ENCODE measurements at regions of chr6 and their contacts with region 1.

Region 1: DNA sequence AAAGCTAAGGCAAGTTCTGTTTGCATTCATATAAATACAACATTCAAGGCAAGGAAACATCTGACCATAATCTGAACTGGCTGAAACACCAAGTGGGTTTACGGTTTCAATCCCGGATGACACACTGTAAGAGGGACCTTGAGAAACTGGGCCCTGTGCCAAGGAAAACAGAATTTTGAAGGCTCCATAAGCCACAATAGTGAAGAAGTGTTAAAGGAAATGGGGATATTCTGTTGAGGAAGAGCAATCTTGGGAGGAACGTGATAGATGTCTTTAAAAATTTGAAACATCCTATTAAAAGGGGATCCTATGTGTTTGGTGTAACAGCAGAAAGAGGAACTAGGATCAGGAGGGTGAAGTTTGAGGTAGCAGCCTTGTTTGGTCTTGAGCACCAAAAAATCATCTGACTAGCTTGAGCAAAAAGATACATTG is 82.4 kb upstream of the TAB2 start:
- DNase-seq: no peak
- H3K4me3 Mint-ChIP-seq: no peak overlapping the region
- H3K27ac Mint-ChIP-seq: peak overlapping the region; percentile 99
- H3K4me1 Mint-ChIP-seq: peaks cover 60% of the 10 kb centered on the region
- H3K27me3 Mint-ChIP-seq: no peaks in the 10 kb centered on the region

Region 2: GRCh38 chr6:149082286-149082707 is 152.8 kb before region 1 on chr6:
- intact Hi-C with region 1: loop called (anchors 2 kb)
- DNase-seq: peak; percentile 79
- H3K4me3 Mint-ChIP-seq: no peak overlapping the region
- H3K27ac Mint-ChIP-seq: peak overlapping the region; percentile 77
- H3K4me1 Mint-ChIP-seq: peaks cover 79% of the 10 kb centered on the region
- H3K27me3 Mint-ChIP-seq: no peaks in the 10 kb centered on the region

Region 3: DNA sequence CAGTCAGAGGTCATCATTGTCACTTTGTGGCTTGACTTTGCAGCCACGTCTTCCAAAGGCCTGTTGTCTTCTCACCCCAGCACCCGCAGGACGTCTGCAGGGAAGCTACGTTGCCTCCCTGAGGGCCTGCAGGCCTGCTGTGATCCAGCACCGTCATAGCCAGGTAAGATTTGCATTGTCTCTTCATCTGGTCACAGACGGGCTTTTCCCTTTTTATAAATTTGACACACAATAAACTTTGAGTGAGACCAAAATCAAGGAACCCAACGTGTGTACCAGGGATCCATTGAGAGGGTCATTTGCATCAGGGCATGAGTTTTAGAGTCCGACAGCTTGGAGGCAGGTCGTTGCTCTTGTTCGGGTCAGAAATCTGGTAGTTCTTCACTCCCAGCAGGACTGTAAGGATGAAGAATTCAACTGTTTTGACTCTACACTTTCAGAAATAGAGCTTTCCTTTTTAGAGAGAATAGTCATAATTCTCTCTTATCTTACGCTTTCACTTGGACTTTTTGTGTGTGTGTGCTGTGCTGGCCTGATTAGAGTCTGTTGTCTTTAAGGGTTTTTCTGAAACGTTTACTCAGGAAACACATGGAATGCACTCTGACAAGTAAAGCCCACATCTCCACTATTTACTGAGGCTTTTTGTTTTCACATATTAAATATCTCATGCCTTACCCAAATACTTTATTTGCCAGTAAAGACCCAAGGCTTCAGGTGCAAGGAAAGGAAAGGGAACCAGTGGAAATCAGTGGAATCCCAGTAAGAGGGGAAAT is 94.8 kb before region 1 on chr6:
- intact Hi-C with region 1: loop called (anchors 1 kb)
- DNase-seq: no peak
- H3K4me3 Mint-ChIP-seq: peak overlapping the region; percentile 84
- H3K27ac Mint-ChIP-seq: peak overlapping the region; percentile 100
- H3K4me1 Mint-ChIP-seq: peaks cover 46% of the 10 kb centered on the region
- H3K27me3 Mint-ChIP-seq: no peaks in the 10 kb centered on the region

Region 4: DNA sequence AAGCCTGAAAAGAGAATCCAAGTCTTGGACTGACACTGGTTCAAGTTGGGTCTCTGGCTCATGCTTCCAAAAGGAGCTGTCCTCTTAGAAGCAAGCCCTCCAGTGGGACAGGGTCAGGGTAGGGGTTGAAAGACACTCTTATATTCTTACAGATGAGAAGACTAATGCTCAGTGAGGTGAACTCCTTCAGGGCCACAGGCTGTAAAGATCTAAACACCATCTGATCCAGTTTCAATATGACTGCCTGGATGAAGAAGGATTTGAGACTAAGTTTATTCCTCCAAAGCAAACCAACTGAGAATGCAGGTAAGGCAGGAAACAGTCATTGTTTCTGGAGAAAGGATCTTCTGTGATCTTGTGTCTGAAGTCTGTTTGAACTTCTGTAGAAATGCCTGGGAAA is 16.7 kb before region 1 on chr6:
- intact Hi-C with region 1: loop called (anchors 1 kb)
- DNase-seq: no peak
- H3K4me3 Mint-ChIP-seq: peak overlapping the region; percentile 28
- H3K27ac Mint-ChIP-seq: peak overlapping the region; percentile 86
- H3K4me1 Mint-ChIP-seq: peaks cover 48% of the 10 kb centered on the region
- H3K27me3 Mint-ChIP-seq: no peaks in the 10 kb centered on the region

Region 5: GRCh38 chr6:149335924-149336608 is 100.9 kb after region 1 on chr6:
- intact Hi-C with region 1: loop called (anchors 5 kb)
- DNase-seq: no peak
- H3K4me3 Mint-ChIP-seq: peak overlapping the region; percentile 45
- H3K27ac Mint-ChIP-seq: peak overlapping the region; percentile 88
- H3K4me1 Mint-ChIP-seq: peaks cover 80% of the 10 kb centered on the region
- H3K27me3 Mint-ChIP-seq: no peaks in the 10 kb centered on the region

Region 6: GRCh38 chr6:149389509-149390297 is 154.6 kb after region 1 on chr6:
- intact Hi-C with region 1: loop called (anchors 5 kb)
- DNase-seq: no peak
- H3K4me3 Mint-ChIP-seq: no peak overlapping the region
- H3K27ac Mint-ChIP-seq: peak overlapping the region; percentile 9
- H3K4me1 Mint-ChIP-seq: peaks cover 60% of the 10 kb centered on the region
- H3K27me3 Mint-ChIP-seq: no peaks in the 10 kb centered on the region

Measured in activated T-helper 2 cell treated with anti-CD3 and anti-CD28 coated beads, Interferon-gamma antibody, Interleukin-2, Interleukin-4, amounts not matched to agents 10 μg/mL and 5 μg/mL and 100 μg/mL, durations not matched to agents 14 hours and 24 hours and 36 hours (primary cell).